SK-N-SH (cell line): ENCODE measurements at regions of chr5 and their contacts with region 1.

Region 1: GRCh38 chr5:178273665-178274541 is 41.3 kb upstream of the PHYKPL start:
- DNase-seq: no peak
- H3K4me3 ChIP-seq: no peak overlapping the region
- H3K27ac ChIP-seq: no peak overlapping the region; a peak in 1 of 4 replicates
- H3K4me1 ChIP-seq: peaks cover 0 to 6% of the 10 kb centered on the region in 2 experiments; a peak in 1 of 4 replicates
- H3K27me3 ChIP-seq: no peaks in the 10 kb centered on the region
- CTCF ChIP-seq: no peak
- EP300 ChIP-seq: no peak
- RAD21 ChIP-seq: no peak

Region 2: DNA sequence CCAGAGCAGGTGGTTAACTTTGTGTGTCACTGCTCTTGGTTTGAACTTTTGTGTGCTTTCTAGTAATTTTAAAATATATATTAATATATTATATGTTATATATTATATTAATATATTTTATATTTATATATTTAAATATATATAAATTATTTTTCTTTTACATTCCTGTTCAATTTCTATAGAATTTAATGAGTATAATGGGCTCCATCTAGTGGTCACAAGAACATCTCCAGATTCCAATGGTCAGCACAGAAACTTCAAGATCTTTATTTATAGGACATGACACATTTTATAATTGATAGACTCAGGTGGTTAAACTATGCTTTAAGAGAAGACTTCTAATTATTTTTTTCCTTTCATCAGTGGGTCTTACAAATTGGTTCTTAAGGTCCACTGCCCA is 277.2 kb after region 1 on chr5:
- CTCF ChIA-PET with region 1: interaction called, 61 read pairs
- POLR2A ChIA-PET with region 1: no interaction called
- DNase-seq: peak; percentile 54
- H3K4me3 ChIP-seq: no peak overlapping the region
- H3K27ac ChIP-seq: no peak overlapping the region; a peak in 1 of 4 replicates
- H3K4me1 ChIP-seq: peaks cover 0 to 29% of the 10 kb centered on the region in 2 experiments; a peak in 2 of 4 replicates
- H3K27me3 ChIP-seq: no peaks in the 10 kb centered on the region
- CTCF ChIP-seq: peak; percentile 45
- EP300 ChIP-seq: no peak
- RAD21 ChIP-seq: peak; percentile 66